Tibial artery (tissue), 4 donors: ENCODE measurements at regions of chr12 and their contacts with region 1.

Region 1: GRCh38 chr12:111455448-111456320 is 50.0 kb downstream of the SH2B3 start:
- DNase-seq: peak in 1 of 2 donors; percentile 61
- H3K4me3 ChIP-seq: no peak overlapping the region
- H3K27ac ChIP-seq: peak overlapping the region in 1 of 2 donors; percentile 39
- H3K4me1 ChIP-seq: peaks cover 0 to 13% (median 10%) of the 10 kb centered on the region in 4 donors
- H3K27me3 ChIP-seq: no peaks in the 10 kb centered on the region
- CTCF ChIP-seq: no peak

Region 2: GRCh38 chr12:109706747-109707469 is 1748.8 kb before region 1 on chr12:
- intact Hi-C with region 1: loop called (anchors 5 kb)
- DNase-seq: no peak
- H3K4me3 ChIP-seq: no peak overlapping the region
- H3K27ac ChIP-seq: no peak overlapping the region
- H3K4me1 ChIP-seq: peaks cover 0 to 1% (median 0%) of the 10 kb centered on the region in 4 donors
- H3K27me3 ChIP-seq: peaks cover under 1 to 69% of the 10 kb centered on the region in 2 donors
- CTCF ChIP-seq: no peak

Region 3: DNA sequence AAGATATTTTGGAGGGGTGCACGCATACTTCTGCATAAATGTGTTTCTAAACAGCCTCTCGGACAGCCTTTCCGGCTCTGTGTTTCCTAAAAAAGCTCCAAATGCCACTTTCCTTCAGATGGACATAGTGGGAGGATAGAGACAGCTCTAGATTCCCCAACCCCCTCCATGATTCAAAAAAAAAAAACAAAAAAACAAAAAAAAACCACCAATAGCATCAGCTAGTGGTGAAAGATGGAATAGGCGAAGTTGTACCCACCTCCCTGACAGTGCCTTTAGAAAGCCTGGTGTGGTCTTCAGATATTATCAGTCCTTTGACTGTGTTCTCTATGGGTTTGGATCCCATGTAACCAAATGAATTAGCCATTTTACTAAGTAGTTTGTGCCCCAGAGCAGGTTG is 180.9 kb before region 1 on chr12:
- intact Hi-C with region 1: no loop called
- DNase-seq: no peak
- H3K4me3 ChIP-seq: no peak overlapping the region
- H3K27ac ChIP-seq: no peak overlapping the region
- H3K4me1 ChIP-seq: peaks cover 0 to 7% (median 3%) of the 10 kb centered on the region in 4 donors
- H3K27me3 ChIP-seq: peaks cover 0 to 77% of the 10 kb centered on the region in 2 donors
- CTCF ChIP-seq: no peak

Region 4: DNA sequence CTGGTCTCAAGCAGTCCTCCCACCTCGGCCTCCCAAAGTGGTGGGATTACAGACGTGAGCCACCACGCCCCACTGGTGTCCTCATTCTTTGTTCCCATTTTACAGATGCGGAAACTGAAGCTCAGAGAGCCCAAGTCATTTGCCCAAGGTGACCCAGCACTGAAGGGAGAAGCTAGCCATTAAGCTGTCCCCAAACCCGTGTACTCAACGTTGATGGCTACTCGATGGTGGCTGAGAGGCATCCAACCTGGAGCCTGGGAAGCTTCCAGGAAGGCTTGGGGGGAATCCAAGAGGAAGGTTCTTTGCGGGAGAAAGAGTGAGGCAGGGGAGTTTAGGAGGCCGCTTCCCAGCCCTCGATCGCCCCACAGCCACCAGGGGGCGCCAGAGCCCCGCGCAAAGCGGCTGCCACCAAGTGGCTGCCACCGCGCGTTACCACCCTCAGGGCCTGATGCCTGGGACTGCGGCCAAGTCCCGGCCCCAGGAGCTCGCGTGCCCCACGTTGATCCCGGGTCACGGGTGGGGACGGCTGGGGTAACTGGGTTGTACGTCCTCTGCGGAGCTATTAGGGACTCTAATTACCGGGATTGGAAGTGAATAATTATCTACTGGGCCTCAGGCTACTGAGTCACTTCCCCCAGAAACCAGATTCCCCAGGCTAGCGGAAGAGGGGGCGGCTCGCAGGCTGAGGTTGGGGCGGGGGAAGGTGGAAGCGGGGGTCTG is 58.8 kb before region 1 on chr12:
- intact Hi-C with region 1: loop called (anchors 2 kb)
- DNase-seq: peak; percentile 76 to 89
- H3K4me3 ChIP-seq: peak overlapping the region; percentile 26 to 34
- H3K27ac ChIP-seq: peak overlapping the region in 1 of 2 donors; percentile 14
- H3K4me1 ChIP-seq: peaks cover 0 to 9% (median 6%) of the 10 kb centered on the region in 4 donors
- H3K27me3 ChIP-seq: peaks cover 0 to 2% of the 10 kb centered on the region in 2 donors
- CTCF ChIP-seq: peak; percentile 99 to 100